ENCODE measurements at regions of chr1 and their contacts with region 1.

Region 1: GRCh38 chr1:156892190-156893047 is 1.1 kb upstream of the PEAR1 start:
- H3K4me3 ChIP-seq: no peak overlapping the region
- H3K27ac ChIP-seq: no peak overlapping the region
- H3K4me1 ChIP-seq: no peaks in the 10 kb centered on the region
- CTCF ChIP-seq: peak; percentile 86

Region 2: DNA sequence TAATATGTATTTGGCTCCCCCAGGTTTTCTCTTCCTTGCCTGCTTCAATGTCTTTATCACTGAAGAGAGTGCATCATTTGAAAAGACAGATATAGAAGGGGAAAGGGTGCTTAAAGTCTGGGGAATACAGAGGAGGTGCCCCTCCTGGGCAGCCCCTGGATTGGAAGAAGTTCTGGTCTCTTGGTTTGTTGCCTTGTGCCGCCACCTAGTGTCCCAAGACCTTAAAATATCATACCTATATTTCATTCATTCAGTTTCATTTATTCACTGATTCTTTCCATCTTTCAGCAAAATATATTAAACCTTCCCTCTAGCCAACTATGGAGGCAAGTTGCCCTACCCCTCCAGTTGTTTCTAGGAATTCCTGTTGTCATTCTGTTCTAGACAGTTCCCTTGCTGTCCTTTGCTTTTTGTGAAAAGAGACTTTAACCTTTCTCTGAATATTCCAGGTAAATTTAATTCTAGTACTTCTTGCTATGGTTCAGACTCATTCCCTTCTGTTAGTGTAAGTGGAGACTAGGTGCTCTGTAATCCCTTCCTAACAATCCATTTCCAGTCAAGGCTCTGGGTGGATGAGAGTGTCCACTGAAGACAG is 447.9 kb before region 1 on chr1:
- CTCF ChIA-PET with region 1: no interaction called
- POLR2A ChIA-PET with region 1: no interaction called
- H3K4me3 ChIP-seq: no peak overlapping the region
- H3K27ac ChIP-seq: no peak overlapping the region
- H3K4me1 ChIP-seq: peaks cover 3% of the 10 kb centered on the region; the same call in 1 of the 2 replicates
- CTCF ChIP-seq: peak; percentile 33

Region 3: DNA sequence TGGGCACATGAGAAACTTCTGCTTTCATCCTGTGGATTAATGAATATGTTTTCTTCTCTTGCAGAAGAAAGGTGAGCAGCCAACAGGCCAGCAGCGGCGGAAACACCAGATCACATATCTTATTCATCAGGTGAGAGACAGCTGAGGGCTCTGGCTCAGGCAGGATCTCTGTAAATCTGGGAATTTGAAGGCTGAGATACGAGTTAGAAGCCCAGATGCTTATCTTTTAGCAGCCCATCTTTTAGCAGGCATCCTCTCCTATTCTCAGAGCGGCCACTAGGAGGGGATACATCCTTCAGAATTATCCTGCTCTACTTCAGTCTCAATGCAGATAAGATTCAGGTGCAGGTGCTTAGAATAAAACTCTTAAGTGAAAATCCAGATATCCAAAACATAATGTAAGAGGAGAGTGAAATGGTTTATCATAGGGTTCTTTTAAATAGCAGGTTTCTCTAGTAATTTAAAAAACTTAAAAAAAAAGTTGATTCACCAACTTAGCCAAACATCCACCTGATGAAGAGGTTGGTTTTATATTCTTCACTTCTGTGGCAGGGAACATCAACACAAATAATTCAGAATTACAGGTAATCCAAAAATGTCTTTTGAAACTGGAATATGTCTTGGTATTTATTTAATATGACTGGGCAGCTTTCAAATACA is 95.1 kb before region 1 on chr1:
- CTCF ChIA-PET with region 1: interaction called, 33 read pairs
- POLR2A ChIA-PET with region 1: no interaction called
- H3K4me3 ChIP-seq: no peak overlapping the region
- H3K27ac ChIP-seq: no peak overlapping the region
- H3K4me1 ChIP-seq: no peaks in the 10 kb centered on the region
- CTCF ChIP-seq: 0 out of 2 replicates have a peak, but pooled peaks have one; percentile 47

Region 4: DNA sequence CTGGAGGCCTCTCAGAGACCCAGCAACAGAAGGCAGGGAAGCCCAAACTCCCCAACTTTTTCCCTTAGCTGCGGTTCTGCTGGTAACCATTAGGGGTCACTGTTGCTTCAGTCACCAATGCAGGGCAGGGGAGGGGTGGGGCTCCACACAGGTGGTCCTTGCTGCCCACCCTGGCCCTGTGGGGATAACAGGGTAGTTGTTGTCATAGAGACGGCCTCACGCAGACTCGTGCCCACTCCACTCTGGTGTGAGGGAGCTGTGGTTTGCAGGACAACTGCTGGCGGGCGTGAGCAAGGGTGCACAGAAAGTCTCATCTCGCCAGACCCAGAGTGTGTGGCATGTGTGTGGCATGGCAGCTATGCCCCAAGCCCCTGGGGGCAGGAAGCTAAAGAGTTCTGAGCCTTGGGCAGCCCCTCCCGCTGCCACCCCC is 53.4 kb before region 1 on chr1:
- CTCF ChIA-PET with region 1: interaction called, 59 read pairs
- POLR2A ChIA-PET with region 1: interaction called, 8 read pairs
- H3K4me3 ChIP-seq: no peak overlapping the region
- H3K27ac ChIP-seq: no peak overlapping the region
- H3K4me1 ChIP-seq: no peaks in the 10 kb centered on the region
- CTCF ChIP-seq: peak; percentile 78; the same call in 1 of the 2 replicates

Region 5: GRCh38 chr1:156860113-156860627 is 32.2 kb before region 1 on chr1:
- CTCF ChIA-PET with region 1: interaction called, 79 read pairs
- POLR2A ChIA-PET with region 1: interaction called, 5 read pairs
- H3K4me3 ChIP-seq: peak overlapping the region; percentile 35
- H3K27ac ChIP-seq: no peak overlapping the region
- H3K4me1 ChIP-seq: peaks cover 2% of the 10 kb centered on the region; the same call in 1 of the 2 replicates
- CTCF ChIP-seq: peak; percentile 90

Region 6: DNA sequence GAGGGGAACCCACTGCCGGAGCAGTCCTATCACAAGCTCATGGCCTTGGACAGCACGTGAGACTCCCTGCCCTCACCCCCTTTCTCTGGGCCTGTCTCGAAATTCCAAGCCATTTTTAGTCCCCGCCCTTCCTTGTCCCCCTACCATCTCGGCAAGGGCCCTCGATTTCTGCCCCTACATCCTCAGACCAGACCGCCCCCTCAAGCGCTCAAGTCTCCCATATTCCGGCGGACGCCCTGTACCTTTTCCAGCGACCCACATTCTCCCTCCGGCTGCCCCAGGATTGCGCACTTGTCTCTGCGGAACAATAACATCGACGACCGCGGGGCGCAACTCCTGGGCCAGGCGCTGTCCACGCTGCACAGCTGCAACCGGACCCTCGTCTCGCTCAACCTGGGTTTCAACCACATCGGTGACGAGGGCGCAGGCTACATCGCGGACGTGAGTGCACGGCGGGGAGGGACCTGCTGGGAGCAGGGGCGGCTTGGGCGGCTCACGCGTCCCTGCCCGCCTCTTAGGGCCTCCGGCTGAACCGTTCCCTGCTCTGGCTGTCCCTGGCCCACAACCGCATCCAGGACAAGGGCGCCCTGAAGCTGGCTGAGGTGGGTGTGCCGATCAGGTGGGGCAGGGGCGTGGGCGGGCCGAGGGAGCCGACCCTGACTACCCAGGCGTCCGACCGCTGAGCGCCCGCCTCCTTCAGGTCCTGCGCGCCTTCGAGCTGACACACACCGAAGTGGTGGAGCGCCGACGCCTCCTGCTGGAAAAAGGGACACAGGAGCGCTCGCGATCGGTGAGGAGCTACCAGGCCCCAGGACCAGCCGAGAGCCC is 35.0 kb after region 1 on chr1:
- CTCF ChIA-PET with region 1: interaction called, 199 read pairs
- POLR2A ChIA-PET with region 1: interaction called, 3 read pairs
- H3K4me3 ChIP-seq: peak overlapping the region; percentile 33
- H3K27ac ChIP-seq: no peak overlapping the region; the same call in 1 of the 2 replicates
- H3K4me1 ChIP-seq: no peaks in the 10 kb centered on the region; the same call in 1 of the 2 replicates
- CTCF ChIP-seq: peak; percentile 90